ENCODE measurements at regions of chr16 and their contacts with region 1.

Region 1: GRCh38 chr16:68528686-68529379 is 10.3 kb upstream of the ZFP90 start:
- DNase-seq: peak; percentile 86 to 92
- ATAC-seq: peak; percentile 89 to 96 (median 93)
- H3K4me3 ChIP-seq: peak overlapping the region; percentile 47
- H3K27ac ChIP-seq: no peak overlapping the region
- H3K4me1 ChIP-seq: peaks cover 10% of the 10 kb centered on the region
- H3K27me3 ChIP-seq: no peaks in the 10 kb centered on the region
- CTCF ChIP-seq: peak; percentile 91

Region 2: GRCh38 chr16:68416057-68417046 is 112.5 kb before region 1 on chr16:
- intact Hi-C with region 1: no loop called
- DNase-seq: no peak
- ATAC-seq: peak in 3 of 4 donors; percentile 39 to 48 (median 42)
- H3K4me3 ChIP-seq: no peak overlapping the region
- H3K27ac ChIP-seq: no peak overlapping the region
- H3K4me1 ChIP-seq: no peaks in the 10 kb centered on the region
- H3K27me3 ChIP-seq: no peaks in the 10 kb centered on the region
- CTCF ChIP-seq: no peak

Region 3: GRCh38 chr16:68800257-68800875 is 271.5 kb after region 1 on chr16:
- intact Hi-C with region 1: loop called in 1 of 2 experiments (anchors 5 kb)
- DNase-seq: no peak
- ATAC-seq: no peak
- H3K4me3 ChIP-seq: no peak overlapping the region
- H3K27ac ChIP-seq: no peak overlapping the region
- H3K4me1 ChIP-seq: no peaks in the 10 kb centered on the region
- H3K27me3 ChIP-seq: no peaks in the 10 kb centered on the region
- CTCF ChIP-seq: peak; percentile 19

Region 4: GRCh38 chr16:68843482-68844210 is 314.8 kb after region 1 on chr16 and contains the start of gene TANGO6:
- intact Hi-C with region 1: loop called (anchors 2 to 10 kb)
- DNase-seq: peak; percentile 90 to 94
- ATAC-seq: peak; percentile 98 to 100 (median 99)
- H3K4me3 ChIP-seq: peak within 1 kb of the TSS; percentile 99
- H3K27ac ChIP-seq: peak within 1 kb of the TSS; percentile 95
- H3K4me1 ChIP-seq: peaks cover 7% of the 10 kb centered on the region
- H3K27me3 ChIP-seq: no peaks in the 10 kb centered on the region
- CTCF ChIP-seq: peak; percentile 13
- total RNA-seq, gene TANGO6: 12.1 to 16.2 (median 13.3) TPM

Region 5: GRCh38 chr16:69123910-69124309 is 595.1 kb after region 1 on chr16:
- intact Hi-C with region 1: loop called in 1 of 2 experiments (anchors 10 kb)
- DNase-seq: no peak
- ATAC-seq: peak; percentile 44 to 74 (median 54)
- H3K4me3 ChIP-seq: no peak overlapping the region
- H3K27ac ChIP-seq: no peak overlapping the region
- H3K4me1 ChIP-seq: peaks cover under 1% of the 10 kb centered on the region
- H3K27me3 ChIP-seq: no peaks in the 10 kb centered on the region
- CTCF ChIP-seq: peak; percentile 69

Region 6: DNA sequence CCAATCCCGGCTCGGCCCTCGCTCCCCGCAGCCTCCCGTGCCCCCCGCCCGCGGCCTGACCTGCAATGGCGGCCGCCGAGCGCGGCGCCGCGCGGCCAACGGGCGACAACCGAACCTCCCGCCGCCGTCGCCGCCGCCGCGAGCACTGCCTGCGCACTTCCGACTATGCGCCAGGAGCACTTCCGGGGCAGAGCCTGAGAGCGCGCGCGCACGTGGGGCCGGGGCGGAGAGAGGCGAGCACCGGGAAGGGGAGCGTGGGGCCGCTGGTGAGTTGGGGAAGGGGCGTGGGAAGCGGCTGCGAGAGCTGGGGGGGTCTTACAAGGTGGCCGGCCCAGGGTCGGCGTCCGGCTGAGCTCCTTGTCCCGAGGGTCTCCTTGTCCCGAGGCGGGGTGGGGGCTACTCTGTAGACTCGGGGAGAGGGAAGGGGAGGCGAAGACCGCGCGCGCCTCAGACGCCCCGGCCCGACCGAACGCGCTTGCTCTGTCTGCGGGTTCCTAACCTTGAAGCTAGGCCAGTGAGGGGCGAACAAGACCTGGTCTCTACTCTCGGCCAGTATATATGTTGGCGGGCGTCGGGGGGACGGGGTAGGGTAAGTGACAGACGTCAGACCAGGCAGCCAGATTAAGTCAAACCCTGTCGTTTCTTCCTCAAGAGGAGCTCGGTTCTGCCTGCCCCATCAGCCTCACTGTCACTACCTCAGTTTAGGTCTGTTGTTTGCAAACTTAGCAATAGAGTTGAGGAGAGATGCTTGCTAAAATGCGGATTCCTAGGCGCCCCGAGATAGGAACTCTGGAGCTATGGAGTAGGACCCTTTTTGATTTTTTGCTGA is 603.8 kb after region 1 on chr16 and contains the starts of genes CHTF8 and UTP4:
- intact Hi-C with region 1: loop called (anchors 5 to 10 kb)
- DNase-seq: peak; percentile 89 to 94
- ATAC-seq: peak; percentile 95 to 97 (median 96)
- H3K4me3 ChIP-seq: peak within 1 kb of the TSS; percentile 94
- H3K27ac ChIP-seq: peak within 1 kb of the TSS; percentile 90
- H3K4me1 ChIP-seq: peaks cover 17% of the 10 kb centered on the region
- H3K27me3 ChIP-seq: no peaks in the 10 kb centered on the region
- CTCF ChIP-seq: no peak
- total RNA-seq, gene CHTF8: 26.2 to 69.1 (median 49.9) TPM
- total RNA-seq, gene UTP4: 38.8 to 85.3 (median 73.1) TPM